ENCODE measurements at regions of chr3 and their contacts with region 1.

Region 1: GRCh38 chr3:154252759-154253638 is 71.3 kb downstream of the DHX36 start:
- DNase-seq: peak; percentile 92

Region 2: GRCh38 chr3:154095832-154096421 is 157.1 kb before region 1 on chr3:
- intact Hi-C with region 1: loop called (anchors 5 kb)
- DNase-seq: no peak

Measured in cardiac septum (tissue), 1 donor.